ENCODE measurements at regions of chr17 and their contacts with region 1.

Region 1: DNA sequence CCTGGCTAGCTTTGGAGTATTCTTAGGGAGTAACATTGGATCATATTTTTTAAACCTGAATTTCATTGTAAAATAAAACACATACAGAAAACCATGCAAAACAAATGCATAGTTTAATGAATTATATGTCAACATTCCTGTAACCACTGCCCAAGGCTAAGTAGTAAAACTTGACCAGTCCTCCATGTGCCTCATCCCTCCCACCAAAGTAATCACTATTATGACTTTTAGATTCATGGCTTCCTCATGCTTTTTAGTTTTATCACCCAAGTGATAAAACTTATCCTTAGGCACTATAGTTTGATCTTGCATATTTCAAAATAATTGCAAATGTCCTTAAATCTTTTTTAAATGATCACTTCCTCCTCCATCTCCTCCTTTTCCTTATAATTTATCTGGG is 20.4 kb downstream of the PRKCA start:
- DNase-seq: no peak
- ATAC-seq: no peak
- H3K4me3 ChIP-seq: no peak overlapping the region
- H3K4me3 Mint-ChIP-seq: peak overlapping the region in 2 of 10 donors; percentile 17 to 29
- H3K27ac ChIP-seq: no peak overlapping the region
- H3K27ac Mint-ChIP-seq: peak overlapping the region in 7 of 9 donors; percentile 20 to 92 (median 78)
- H3K4me1 ChIP-seq: peaks cover 0 to 28% of the 10 kb centered on the region in 2 donors
- H3K4me1 Mint-ChIP-seq: peaks cover 16 to 74% (median 58%) of the 10 kb centered on the region in 7 donors
- H3K27me3 ChIP-seq: no peaks in the 10 kb centered on the region
- H3K27me3 Mint-ChIP-seq: no peaks in the 10 kb centered on the region

Region 2: GRCh38 chr17:66310528-66311148 is 12.1 kb before region 1 on chr17:
- CTCF ChIA-PET with region 1: interaction called, 8 read pairs
- POLR2A ChIA-PET with region 1: interaction called, 89 read pairs
- intact Hi-C with region 1: no loop called
- DNase-seq: peak in 1 of 9 donors; percentile 37
- ATAC-seq: no peak
- H3K4me3 ChIP-seq: no peak overlapping the region
- H3K4me3 Mint-ChIP-seq: peak overlapping the region in 9 of 10 donors; percentile 2 to 99 (median 51)
- H3K27ac ChIP-seq: peak overlapping the region; percentile 31
- H3K27ac Mint-ChIP-seq: peak overlapping the region; percentile 21 to 98 (median 88)
- H3K4me1 ChIP-seq: peaks cover 11 to 68% of the 10 kb centered on the region in 2 donors
- H3K4me1 Mint-ChIP-seq: peaks cover 56 to 100% (median 94%) of the 10 kb centered on the region in 7 donors
- H3K27me3 ChIP-seq: no peaks in the 10 kb centered on the region
- H3K27me3 Mint-ChIP-seq: no peaks in the 10 kb centered on the region